ENCODE measurements at regions of chr11 and their contacts with region 1.

Region 1: DNA sequence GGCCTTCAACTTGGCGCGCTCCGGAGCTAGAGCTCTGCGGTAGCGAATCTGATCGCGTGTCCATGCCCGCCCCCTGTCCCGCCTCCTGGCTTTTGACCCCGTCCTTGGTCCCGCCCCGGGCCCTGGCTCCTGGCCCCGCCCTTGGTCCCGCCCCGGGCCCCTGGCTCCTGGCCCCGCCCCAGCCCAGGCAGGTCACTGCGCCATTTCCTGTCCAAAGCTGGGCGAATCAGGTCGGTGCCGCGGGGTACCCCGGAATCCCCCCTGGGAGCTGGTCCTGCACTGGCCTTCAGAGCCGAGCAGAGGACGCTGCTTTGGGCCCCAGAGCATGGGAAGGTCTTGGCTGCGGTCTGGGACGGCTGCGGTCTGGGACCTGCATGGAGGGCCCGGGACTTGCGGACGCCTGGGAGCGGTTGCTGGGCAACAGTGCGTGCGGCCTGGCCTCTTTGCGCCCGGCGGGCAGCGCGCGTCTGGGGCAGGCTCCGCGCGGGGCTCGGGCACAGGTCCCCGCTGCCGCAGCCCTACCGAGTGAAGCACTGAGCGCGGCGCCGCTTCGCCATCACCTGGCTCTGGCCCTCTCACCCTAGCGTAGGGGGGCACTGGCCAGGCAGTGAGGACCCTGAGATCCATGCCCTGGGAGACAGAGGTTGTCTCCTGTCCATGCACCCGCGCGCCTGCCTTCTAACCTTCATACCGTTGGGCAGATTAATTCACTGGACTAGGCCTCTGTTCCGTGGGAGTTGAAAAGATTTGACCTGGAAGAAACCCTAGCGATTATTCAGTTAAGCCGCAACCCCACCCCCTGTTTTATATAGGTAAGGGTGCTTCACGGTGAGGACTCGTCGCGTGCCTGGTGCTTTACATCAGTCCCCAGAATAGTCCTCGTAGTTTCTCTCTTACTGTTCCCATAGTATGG is at the start of gene TTC12:
- DNase-seq: peak; percentile 86 to 95 (median 93)
- ATAC-seq: peak; percentile 98
- H3K4me3 ChIP-seq: peak within 1 kb of the TSS; percentile 60
- H3K4me3 Mint-ChIP-seq: peak within 1 kb of the TSS; percentile 93
- H3K27ac ChIP-seq: peak within 1 kb of the TSS; percentile 63 to 85
- H3K27ac Mint-ChIP-seq: peak within 1 kb of the TSS; percentile 88
- H3K4me1 ChIP-seq: peaks cover 30% of the 10 kb centered on the region
- H3K4me1 Mint-ChIP-seq: peaks cover 46% of the 10 kb centered on the region
- H3K27me3 ChIP-seq: no peaks in the 10 kb centered on the region
- H3K27me3 Mint-ChIP-seq: no peaks in the 10 kb centered on the region
- CTCF ChIP-seq: no peak
- total RNA-seq, gene TTC12: 26.5 to 34.5 TPM

Region 2: GRCh38 chr11:111766093-111766833 is 1548.4 kb before region 1 on chr11 and contains the start of gene PPP2R1B:
- CTCF ChIA-PET with region 1: no interaction called
- POLR2A ChIA-PET with region 1: no interaction called
- intact Hi-C with region 1: loop called in 1 of 2 experiments (anchors 10 kb)
- DNase-seq: peak; percentile 52 to 85 (median 64)
- ATAC-seq: peak; percentile 97
- H3K4me3 ChIP-seq: peak within 1 kb of the TSS; percentile 85
- H3K4me3 Mint-ChIP-seq: peak within 1 kb of the TSS; percentile 99
- H3K27ac ChIP-seq: peak within 1 kb of the TSS; percentile 16 to 67
- H3K27ac Mint-ChIP-seq: peak within 1 kb of the TSS; percentile 70
- H3K4me1 ChIP-seq: peaks cover 12% of the 10 kb centered on the region
- H3K4me1 Mint-ChIP-seq: peaks cover 41% of the 10 kb centered on the region
- H3K27me3 ChIP-seq: no peaks in the 10 kb centered on the region
- H3K27me3 Mint-ChIP-seq: no peaks in the 10 kb centered on the region
- CTCF ChIP-seq: no peak
- total RNA-seq, gene PPP2R1B: 34.5 to 39.2 TPM

Region 3: DNA sequence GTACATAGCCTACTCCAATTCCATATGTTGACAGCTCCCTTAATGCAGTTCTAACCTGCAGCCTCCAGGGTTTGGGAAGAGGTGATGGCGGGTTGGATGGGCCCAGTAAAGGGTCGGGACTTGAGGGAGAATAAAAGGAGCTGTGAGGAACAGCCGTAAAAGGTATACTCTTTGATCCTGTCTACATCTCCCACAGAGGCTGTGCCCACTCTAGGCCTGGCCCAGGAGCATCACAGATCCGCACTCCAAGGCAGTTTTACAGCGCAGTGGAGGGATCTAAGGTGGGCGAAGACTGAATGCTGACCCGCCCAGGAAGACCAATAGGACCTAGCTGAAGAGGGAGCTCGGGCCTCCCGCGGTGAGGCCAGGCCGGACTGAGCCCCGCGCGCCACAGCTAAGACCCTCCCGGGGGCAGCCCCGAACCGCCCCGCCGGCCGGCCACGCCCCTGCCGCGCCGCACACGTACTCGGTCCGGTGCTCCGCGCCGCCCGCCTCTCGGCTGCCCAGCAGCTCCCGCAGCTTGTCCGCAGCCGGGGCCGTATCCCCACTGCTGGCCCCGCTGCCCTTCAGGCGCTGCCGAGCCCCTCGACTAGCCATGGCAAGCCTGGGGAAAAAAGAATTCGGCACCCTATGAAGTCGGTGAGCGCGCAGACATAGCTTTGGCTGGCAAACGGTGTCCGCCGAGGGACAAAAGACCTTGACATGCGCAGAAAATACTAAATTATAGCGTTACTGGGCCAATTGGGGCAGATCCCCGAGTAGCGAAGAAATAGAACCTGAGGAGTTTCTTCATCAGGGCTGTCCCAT is 1443.6 kb before region 1 on chr11 and contains the start of gene ALG9:
- CTCF ChIA-PET with region 1: no interaction called
- POLR2A ChIA-PET with region 1: no interaction called
- intact Hi-C with region 1: loop called in 1 of 2 experiments (anchors 5 kb)
- DNase-seq: peak; percentile 82 to 92 (median 90)
- ATAC-seq: peak; percentile 83
- H3K4me3 ChIP-seq: peak within 1 kb of the TSS; percentile 82
- H3K4me3 Mint-ChIP-seq: peak within 1 kb of the TSS; percentile 90
- H3K27ac ChIP-seq: peak within 1 kb of the TSS; percentile 83 to 84
- H3K27ac Mint-ChIP-seq: peak within 1 kb of the TSS; percentile 93
- H3K4me1 ChIP-seq: peaks cover 19% of the 10 kb centered on the region
- H3K4me1 Mint-ChIP-seq: peaks cover 35% of the 10 kb centered on the region
- H3K27me3 ChIP-seq: no peaks in the 10 kb centered on the region
- H3K27me3 Mint-ChIP-seq: no peaks in the 10 kb centered on the region
- CTCF ChIP-seq: peak; percentile 26
- total RNA-seq, gene ALG9: 31.1 to 33.4 TPM

Region 4: DNA sequence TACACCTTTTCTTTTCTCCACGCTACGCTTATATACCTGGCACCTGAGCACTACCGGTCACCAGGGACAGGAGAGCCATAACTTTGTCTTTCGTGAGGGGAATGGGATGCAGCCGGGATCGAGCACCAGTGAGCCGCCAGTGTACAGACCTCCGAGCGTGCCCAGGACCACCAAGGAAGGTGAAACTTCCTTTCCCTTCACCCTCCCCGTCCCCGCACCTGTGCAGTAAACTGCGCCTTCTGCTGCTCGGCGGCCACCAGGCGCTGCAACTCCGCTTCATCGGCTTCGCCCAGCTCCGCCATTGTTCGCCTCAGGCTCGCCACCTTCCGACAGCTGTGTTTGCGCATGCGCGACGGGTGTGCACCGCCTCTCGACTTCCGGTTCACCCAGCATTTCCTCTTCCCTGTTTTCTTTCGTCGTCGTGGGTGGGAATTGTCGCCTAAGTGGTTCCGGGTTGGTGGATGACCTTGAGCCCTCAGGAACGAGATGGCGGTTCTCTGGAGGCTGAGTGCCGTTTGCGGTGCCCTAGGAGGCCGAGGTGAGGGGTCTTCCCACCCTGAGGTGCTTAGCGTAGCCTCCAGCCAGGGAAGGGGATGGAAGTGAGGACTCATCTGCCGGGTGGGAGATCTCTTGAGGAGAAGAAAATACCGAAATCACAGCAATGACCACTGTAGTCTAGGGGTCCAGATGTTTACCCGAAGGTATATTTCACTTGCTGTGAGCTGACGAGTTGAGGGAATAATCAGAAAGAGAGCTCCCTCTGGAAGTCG is 1228.0 kb before region 1 on chr11 and contains the starts of genes SDHD and TIMM8B:
- CTCF ChIA-PET with region 1: no interaction called
- POLR2A ChIA-PET with region 1: interaction called, 3 read pairs
- intact Hi-C with region 1: loop called in 1 of 2 experiments (anchors 10 kb)
- DNase-seq: peak; percentile 91 to 99 (median 94)
- ATAC-seq: peak; percentile 93
- H3K4me3 ChIP-seq: peak within 1 kb of the TSS; percentile 88
- H3K4me3 Mint-ChIP-seq: peak within 1 kb of the TSS; percentile 99
- H3K27ac ChIP-seq: peak within 1 kb of the TSS; percentile 35 to 75
- H3K27ac Mint-ChIP-seq: peak within 1 kb of the TSS; percentile 94
- H3K4me1 ChIP-seq: peaks cover 32% of the 10 kb centered on the region
- H3K4me1 Mint-ChIP-seq: peaks cover 54% of the 10 kb centered on the region
- H3K27me3 ChIP-seq: no peaks in the 10 kb centered on the region
- H3K27me3 Mint-ChIP-seq: no peaks in the 10 kb centered on the region
- CTCF ChIP-seq: peak; percentile 29
- total RNA-seq, gene SDHD: 24.8 to 29.4 TPM
- total RNA-seq, gene TIMM8B: 9.1 to 10.5 TPM

Region 5: GRCh38 chr11:112226062-112226830 is 1088.4 kb before region 1 on chr11 and contains the start of gene PTS:
- CTCF ChIA-PET with region 1: no interaction called
- POLR2A ChIA-PET with region 1: interaction called, 7 read pairs
- intact Hi-C with region 1: loop called in 1 of 2 experiments (anchors 2 kb)
- DNase-seq: peak; percentile 68 to 93 (median 80)
- ATAC-seq: peak; percentile 89
- H3K4me3 ChIP-seq: peak within 1 kb of the TSS; percentile 69
- H3K4me3 Mint-ChIP-seq: peak within 1 kb of the TSS; percentile 96
- H3K27ac ChIP-seq: peak within 1 kb of the TSS; percentile 95 to 96
- H3K27ac Mint-ChIP-seq: peak within 1 kb of the TSS; percentile 99
- H3K4me1 ChIP-seq: peaks cover 17% of the 10 kb centered on the region
- H3K4me1 Mint-ChIP-seq: peaks cover 20% of the 10 kb centered on the region
- H3K27me3 ChIP-seq: no peaks in the 10 kb centered on the region
- H3K27me3 Mint-ChIP-seq: no peaks in the 10 kb centered on the region
- CTCF ChIP-seq: no peak
- total RNA-seq, gene PTS: 82.9 to 86.2 TPM

Region 6: DNA sequence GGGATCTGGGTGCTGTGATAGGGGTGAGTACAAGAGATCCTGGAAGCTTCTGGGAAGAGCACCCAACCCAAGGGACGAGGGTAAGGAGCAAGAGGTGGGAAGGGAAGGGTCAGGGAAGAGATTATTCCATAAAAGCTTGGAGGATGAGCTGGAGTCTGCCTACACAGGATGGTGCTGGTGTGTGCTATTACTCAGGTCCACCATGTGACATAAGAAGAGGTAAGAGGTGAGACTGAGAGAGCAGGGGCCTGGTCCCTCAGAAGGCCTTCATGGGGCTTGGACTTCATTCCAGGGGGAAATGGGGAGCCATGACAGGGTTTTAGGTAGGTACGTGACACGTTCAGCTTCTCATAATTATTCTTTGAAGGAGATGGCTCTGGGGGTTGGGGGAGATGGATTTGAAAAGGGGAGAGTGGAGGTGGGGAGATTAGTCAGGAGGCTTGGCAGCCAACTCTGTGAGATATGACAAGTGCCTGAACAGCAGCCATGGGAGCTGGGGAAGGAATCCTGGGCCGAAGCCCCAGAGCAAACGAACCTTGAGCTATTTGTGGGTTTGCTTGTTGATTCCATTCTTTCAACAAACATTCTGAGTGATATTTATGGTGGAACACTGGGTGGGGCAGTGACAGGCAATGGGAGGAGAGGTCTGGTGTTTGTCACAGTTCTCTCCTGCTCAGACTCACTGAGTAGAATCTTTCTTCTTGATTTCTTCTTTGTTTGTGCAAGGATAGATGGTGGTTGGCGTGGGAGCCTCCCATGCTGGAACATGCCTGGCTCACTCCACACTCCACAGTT is 364.7 kb before region 1 on chr11:
- CTCF ChIA-PET with region 1: no interaction called
- POLR2A ChIA-PET with region 1: no interaction called
- intact Hi-C with region 1: no loop called
- DNase-seq: no peak
- ATAC-seq: no peak
- H3K4me3 ChIP-seq: no peak overlapping the region
- H3K4me3 Mint-ChIP-seq: no peak overlapping the region
- H3K27ac ChIP-seq: no peak overlapping the region
- H3K27ac Mint-ChIP-seq: no peak overlapping the region
- H3K4me1 ChIP-seq: no peaks in the 10 kb centered on the region
- H3K4me1 Mint-ChIP-seq: no peaks in the 10 kb centered on the region
- H3K27me3 ChIP-seq: peaks cover 3 to 11% of the 10 kb centered on the region in 2 experiments
- H3K27me3 Mint-ChIP-seq: peaks cover 73% of the 10 kb centered on the region
- CTCF ChIP-seq: no peak

Region 7: DNA sequence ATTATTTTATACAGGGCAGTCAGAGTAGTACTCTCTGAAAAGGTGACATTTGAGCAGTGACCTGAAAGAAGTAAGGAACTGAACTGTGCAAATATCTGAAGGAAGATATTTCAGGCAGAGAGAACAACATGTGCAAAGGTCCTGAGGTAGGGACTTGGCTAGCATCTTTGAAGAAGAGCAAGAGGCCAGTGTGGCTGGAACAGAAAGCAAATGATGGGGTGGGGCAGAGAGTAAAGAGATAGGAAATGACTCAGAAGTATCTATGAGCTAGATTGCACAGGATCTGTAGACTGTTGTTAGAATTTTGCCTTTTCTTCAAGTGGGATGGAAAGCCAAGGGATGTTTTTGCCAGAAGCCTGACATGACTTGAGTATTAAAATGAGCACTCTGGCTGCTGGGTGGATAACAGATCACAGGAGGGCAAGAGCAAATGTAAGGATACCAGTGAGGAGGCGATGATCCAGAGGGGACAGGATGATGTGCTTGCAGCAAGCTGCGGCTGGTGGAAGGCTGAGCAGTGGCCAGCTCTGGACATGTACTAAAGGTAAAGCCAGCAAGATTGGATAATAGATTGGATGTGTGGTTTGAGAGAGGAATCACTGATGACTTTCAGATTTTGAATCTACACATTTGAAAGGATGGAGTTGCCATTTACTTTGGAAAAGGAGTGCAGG is 33.5 kb before region 1 on chr11:
- CTCF ChIA-PET with region 1: no interaction called
- POLR2A ChIA-PET with region 1: no interaction called
- intact Hi-C with region 1: no loop called
- DNase-seq: no peak
- ATAC-seq: no peak
- H3K4me3 ChIP-seq: no peak overlapping the region
- H3K4me3 Mint-ChIP-seq: no peak overlapping the region
- H3K27ac ChIP-seq: no peak overlapping the region
- H3K27ac Mint-ChIP-seq: no peak overlapping the region
- H3K4me1 ChIP-seq: no peaks in the 10 kb centered on the region
- H3K4me1 Mint-ChIP-seq: no peaks in the 10 kb centered on the region
- H3K27me3 ChIP-seq: no peaks in the 10 kb centered on the region
- H3K27me3 Mint-ChIP-seq: no peaks in the 10 kb centered on the region
- CTCF ChIP-seq: no peak

Region 8: DNA sequence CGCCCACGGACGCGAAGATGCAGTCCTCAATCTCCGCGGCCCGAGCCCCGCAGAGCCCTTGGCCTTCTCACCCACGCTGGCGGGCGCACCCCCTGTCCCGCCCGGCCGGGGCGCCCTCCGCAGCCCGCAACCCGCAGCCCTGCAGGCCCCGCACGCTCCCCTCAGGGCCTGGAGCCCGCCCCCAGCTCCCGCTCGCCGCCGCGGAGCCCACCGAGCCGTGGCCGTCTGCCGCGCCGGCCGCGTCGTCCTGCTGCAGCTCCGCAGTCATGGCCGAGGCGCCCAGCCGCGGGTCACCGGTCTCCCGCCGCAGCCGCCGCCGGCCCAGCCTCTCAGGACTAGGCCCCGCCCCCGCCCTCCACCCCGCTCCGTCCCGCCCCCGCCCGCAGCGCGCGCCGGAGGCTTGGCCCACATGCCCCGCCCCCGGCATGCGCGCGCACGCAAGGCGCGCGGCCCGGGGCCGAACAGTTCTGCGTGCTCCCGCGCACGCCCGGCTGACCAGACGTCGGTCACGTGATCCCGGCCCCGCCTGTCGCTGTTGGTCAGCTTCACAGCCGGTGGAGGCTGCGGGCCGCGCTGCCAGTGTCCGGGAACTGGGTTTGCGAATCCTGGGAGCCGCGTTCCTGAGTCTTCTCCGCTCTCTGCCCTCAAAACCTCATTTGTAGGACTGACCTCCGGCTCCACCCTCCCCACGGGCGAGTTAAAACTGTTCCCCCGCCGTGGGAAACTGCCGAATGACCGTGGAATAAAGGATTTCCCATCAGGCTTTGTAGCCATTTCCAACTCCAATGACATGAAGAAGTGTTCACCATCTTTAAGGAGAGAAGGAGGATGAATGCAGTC is 560.8 kb after region 1 on chr11 and contains the start of gene USP28:
- CTCF ChIA-PET with region 1: no interaction called
- POLR2A ChIA-PET with region 1: no interaction called
- intact Hi-C with region 1: loop called in 1 of 2 experiments (anchors 5 kb)
- DNase-seq: peak; percentile 47 to 92 (median 72)
- ATAC-seq: peak; percentile 84
- H3K4me3 ChIP-seq: peak within 1 kb of the TSS; percentile 89
- H3K4me3 Mint-ChIP-seq: peak within 1 kb of the TSS; percentile 100
- H3K27ac ChIP-seq: peak within 1 kb of the TSS; percentile 65 to 80
- H3K27ac Mint-ChIP-seq: peak within 1 kb of the TSS; percentile 91
- H3K4me1 ChIP-seq: peaks cover 19% of the 10 kb centered on the region
- H3K4me1 Mint-ChIP-seq: peaks cover 54% of the 10 kb centered on the region
- H3K27me3 ChIP-seq: no peaks in the 10 kb centered on the region
- H3K27me3 Mint-ChIP-seq: no peaks in the 10 kb centered on the region
- CTCF ChIP-seq: no peak
- total RNA-seq, gene USP28: 7.9 to 9.4 TPM

Region 9: GRCh38 chr11:114400217-114400914 is 1085.7 kb after region 1 on chr11 and contains the starts of genes C11orf71 and RBM7:
- CTCF ChIA-PET with region 1: no interaction called
- POLR2A ChIA-PET with region 1: interaction called, 3 read pairs
- intact Hi-C with region 1: loop called in 1 of 2 experiments (anchors 5 kb)
- DNase-seq: peak; percentile 95 to 100 (median 98)
- ATAC-seq: peak; percentile 91
- H3K4me3 ChIP-seq: peak within 1 kb of the TSS; percentile 92
- H3K4me3 Mint-ChIP-seq: peak within 1 kb of the TSS; percentile 99
- H3K27ac ChIP-seq: peak within 1 kb of the TSS; percentile 93 to 96
- H3K27ac Mint-ChIP-seq: peak within 1 kb of the TSS; percentile 100
- H3K4me1 ChIP-seq: peaks cover 9% of the 10 kb centered on the region
- H3K4me1 Mint-ChIP-seq: peaks cover 63% of the 10 kb centered on the region
- H3K27me3 ChIP-seq: no peaks in the 10 kb centered on the region
- H3K27me3 Mint-ChIP-seq: no peaks in the 10 kb centered on the region
- CTCF ChIP-seq: peak; percentile 28
- total RNA-seq, gene C11orf71: 6.1 to 7.6 TPM
- total RNA-seq, gene RBM7: 76.1 to 81.9 TPM